ENCODE measurements at regions of chr17 and their contacts with region 1.

Region 1: DNA sequence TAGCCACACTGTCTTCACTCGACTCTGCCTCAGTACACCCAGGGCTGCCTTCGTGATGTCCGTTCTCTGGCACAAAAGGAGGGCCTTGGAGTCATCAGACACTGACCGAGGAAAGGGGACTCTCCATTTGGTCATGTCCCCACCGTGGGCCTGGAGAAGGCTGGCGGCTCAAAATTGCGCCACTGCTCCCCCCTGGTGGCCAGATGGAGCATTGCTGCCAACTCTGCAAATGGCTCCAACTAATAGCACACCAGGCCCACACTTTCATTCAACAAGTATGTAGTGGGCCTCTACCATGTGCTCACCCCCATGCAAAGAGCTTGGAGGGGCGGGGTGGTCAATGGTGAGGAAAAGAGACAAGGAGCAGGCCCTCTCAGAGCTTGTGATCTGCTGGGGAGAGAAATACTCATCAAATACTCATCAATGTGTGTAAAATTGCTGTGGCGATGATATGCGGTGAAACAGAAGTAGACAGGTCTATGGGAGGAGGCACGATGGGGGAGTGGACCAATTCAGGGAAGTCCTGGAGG is 5.2 kb upstream of the GRIN2C start:
- DNase-seq: peak; percentile 85
- ATAC-seq: peak; percentile 52

Region 2: GRCh38 chr17:74659898-74660297 is 205.0 kb before region 1 on chr17:
- intact Hi-C with region 1: loop called (anchors 5 kb)
- DNase-seq: no peak
- ATAC-seq: no peak

Region 3: GRCh38 chr17:74744714-74745547 is 120.0 kb before region 1 on chr17:
- intact Hi-C with region 1: loop called (anchors 2 kb)
- DNase-seq: peak; percentile 94
- ATAC-seq: peak; percentile 36

Region 4: GRCh38 chr17:74790161-74791054 is 74.5 kb before region 1 on chr17:
- intact Hi-C with region 1: loop called (anchors 1 kb)
- DNase-seq: no peak
- ATAC-seq: no peak

Region 5: GRCh38 chr17:74842599-74843351 is 22.2 kb before region 1 on chr17:
- intact Hi-C with region 1: loop called (anchors 2 kb)
- DNase-seq: peak; percentile 91
- ATAC-seq: peak; percentile 75

Measured in Right ventricle myocardium inferior (tissue), 1 donor.